Activated CD8-positive, alpha-beta memory T cell treated with anti-CD3 and anti-CD28 coated beads, Interleukin-2, amount 10 ng/mL, durations not matched to agents 7 days and 5 days (primary cell): ENCODE measurements at regions of chr5 and their contacts with region 1.

Region 1: DNA sequence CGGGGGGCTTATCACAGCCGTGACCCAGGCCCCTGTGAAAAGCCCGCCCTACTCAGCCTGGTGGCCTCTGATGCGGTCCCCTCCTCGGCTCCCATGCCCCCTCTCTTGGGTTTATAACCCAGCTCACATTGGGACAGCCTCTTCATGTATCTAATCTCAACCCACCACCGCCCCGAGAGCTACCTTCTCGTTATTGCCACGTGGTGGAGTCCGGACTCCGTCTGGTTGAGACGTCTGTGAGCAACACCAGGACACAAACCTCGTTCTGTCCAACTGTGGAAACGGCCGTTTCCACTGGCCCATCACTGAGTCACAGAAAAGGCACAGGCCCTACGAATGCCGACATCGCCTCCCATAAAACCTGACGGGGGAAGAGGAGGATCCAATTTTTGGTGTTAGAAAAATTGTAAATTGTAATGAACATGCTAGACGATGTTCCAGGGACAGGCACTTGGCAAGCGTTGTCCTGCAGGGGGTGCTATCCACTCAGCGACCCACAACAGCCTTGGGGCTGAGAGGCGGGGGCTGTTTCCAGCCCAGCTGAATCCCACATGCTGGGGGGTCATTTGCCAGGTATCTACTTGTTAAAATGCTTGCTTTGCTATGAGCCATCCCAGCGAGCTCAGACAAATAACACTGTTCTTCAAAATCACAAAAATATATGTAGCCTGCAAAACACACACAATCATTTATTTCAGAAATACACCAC is 37.3 kb upstream of the N4BP3 start:
- DNase-seq: peak; percentile 82
- ATAC-seq: peak; percentile 90
- H3K4me3 Mint-ChIP-seq: no peak overlapping the region
- H3K27ac Mint-ChIP-seq: no peak overlapping the region
- H3K4me1 Mint-ChIP-seq: no peaks in the 10 kb centered on the region
- H3K27me3 Mint-ChIP-seq: peaks cover 7% of the 10 kb centered on the region

Region 2: GRCh38 chr5:178090858-178091540 is 15.0 kb after region 1 on chr5:
- CTCF ChIA-PET with region 1: interaction called, 13 read pairs
- DNase-seq: no peak
- ATAC-seq: no peak
- H3K4me3 Mint-ChIP-seq: no peak overlapping the region
- H3K27ac Mint-ChIP-seq: no peak overlapping the region
- H3K4me1 Mint-ChIP-seq: peaks cover 9% of the 10 kb centered on the region
- H3K27me3 Mint-ChIP-seq: peaks cover 8% of the 10 kb centered on the region

Region 3: DNA sequence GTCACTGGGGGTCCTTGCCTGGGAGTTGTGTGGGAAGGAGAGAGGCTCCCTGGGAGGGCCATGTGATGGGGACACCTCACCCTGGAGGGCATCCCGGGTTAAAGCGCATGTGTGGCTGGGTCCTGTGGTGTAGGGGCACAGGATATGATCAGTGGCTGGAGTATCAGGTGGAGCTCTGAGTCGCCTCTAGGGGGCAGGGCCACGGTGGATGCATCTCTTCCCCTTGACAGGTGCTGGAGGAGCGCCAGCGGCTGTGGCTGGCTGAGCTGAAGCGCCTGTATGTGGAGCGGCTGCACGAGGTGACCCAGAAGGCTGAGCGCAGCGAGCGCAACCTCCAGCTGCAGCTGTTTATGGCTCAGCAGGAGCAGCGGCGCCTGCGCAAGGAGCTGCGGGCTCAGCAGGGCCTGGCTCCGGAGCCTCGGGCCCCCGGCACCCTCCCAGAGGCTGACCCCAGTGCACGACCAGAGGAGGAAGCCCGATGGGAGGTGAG is 44.9 kb after region 1 on chr5:
- CTCF ChIA-PET with region 1: interaction called, 45 read pairs
- DNase-seq: peak; percentile 90
- ATAC-seq: peak; percentile 92
- H3K4me3 Mint-ChIP-seq: no peak overlapping the region
- H3K27ac Mint-ChIP-seq: no peak overlapping the region
- H3K4me1 Mint-ChIP-seq: peaks cover 22% of the 10 kb centered on the region
- H3K27me3 Mint-ChIP-seq: no peaks in the 10 kb centered on the region

Region 4: DNA sequence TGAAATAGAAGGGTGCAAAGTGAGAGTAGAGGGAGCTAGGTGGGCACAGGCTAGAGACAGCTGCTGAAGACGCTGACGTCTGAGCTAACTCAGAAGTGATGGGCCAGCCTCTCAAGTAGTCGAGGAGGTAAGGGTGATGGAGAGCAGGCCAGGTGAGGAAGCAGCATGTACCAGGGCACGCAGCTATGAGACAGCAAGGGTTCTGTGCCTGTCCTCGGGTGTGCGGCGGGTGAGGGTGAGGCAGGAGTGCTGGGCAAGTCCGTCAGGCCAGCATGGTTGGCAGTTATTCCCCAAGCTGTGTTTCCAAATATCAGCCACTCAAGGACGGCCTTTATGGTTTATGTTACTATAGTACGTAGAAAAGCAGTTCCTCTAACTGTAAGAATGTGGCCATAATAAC is 61.0 kb after region 1 on chr5:
- CTCF ChIA-PET with region 1: interaction called, 10 read pairs
- DNase-seq: no peak
- ATAC-seq: no peak
- H3K4me3 Mint-ChIP-seq: no peak overlapping the region
- H3K27ac Mint-ChIP-seq: no peak overlapping the region
- H3K4me1 Mint-ChIP-seq: no peaks in the 10 kb centered on the region
- H3K27me3 Mint-ChIP-seq: no peaks in the 10 kb centered on the region

Region 5: DNA sequence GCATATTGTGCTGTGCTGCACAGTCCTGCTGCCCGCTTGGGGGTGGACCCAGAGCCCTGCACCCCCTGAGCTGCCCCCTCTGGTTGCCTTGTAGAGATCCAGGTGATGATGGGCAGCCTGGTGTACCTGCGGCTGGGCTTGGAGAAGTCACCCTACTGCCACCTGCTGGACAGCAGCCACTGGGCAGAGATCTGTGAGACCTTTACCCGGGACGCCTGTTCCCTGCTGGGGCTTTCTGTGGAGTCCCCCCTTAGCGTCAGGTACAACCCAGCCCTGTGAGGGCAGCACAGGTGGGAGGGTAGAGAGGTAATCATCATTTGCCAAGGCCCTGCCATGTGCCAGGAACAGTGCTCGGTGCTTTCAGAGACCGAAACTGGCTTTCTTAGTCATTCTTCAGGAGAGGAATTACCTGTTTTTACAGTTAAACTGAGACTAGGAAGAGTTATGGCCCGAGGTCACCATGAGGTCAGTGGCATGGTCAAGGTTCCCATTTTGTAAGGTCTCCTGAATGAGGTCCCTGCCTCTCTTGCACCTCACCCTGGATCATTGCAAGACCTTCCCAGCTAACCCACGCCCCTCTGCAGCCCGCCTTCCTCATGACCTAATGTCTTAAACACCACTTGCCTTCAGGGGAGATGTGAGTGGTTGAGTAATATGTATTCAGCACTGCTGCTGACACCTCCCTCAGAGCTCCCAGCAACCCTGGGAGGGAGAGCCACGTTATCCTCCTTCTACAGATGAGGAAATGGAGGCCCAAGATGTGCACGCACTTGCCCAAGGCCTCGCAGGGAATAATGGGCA is 70.2 kb after region 1 on chr5:
- CTCF ChIA-PET with region 1: interaction called, 148 read pairs
- DNase-seq: peak; percentile 81
- ATAC-seq: peak; percentile 89
- H3K4me3 Mint-ChIP-seq: no peak overlapping the region
- H3K27ac Mint-ChIP-seq: no peak overlapping the region
- H3K4me1 Mint-ChIP-seq: peaks cover 31% of the 10 kb centered on the region
- H3K27me3 Mint-ChIP-seq: no peaks in the 10 kb centered on the region

Region 6: DNA sequence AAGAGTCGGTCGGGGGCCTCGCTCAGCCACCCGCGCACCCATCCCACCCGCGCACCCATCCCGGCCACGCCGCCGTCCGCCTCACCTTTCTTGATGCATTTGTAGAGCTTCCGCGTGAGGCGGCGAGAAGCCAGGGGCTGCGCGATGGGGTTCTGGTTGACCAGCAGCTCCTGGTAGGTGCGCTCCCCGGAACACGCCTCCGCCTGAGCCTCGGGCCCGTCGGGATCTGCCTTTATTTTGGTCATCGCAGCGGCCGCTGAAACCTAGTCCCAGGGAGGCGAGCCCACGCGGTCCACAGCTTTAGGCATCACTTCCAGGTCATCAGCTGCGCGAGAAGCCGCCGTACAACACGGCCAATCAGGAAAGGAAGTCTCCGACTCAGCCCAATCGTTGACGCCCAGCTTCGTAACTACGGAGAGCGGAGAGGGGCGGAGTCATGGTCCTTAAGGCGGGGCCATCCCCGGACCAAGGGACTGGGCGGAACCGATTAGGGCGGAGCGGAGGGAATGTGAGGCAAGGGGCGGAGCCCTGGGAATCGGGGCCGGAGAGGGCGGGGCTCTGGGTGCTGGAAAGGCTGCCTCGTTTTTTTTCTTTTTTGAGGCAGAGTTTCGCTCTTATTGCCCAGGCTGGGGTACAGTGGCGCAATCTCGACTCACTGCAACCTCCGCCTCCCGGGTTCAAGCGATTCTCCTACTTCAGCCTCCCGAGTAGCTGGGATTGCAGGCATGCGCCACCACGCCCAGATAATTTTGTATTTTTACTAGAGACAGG is 77.8 kb after region 1 on chr5 and contains the start of gene NHP2:
- CTCF ChIA-PET with region 1: interaction called, 148 read pairs
- DNase-seq: peak; percentile 99
- ATAC-seq: peak; percentile 100
- H3K4me3 Mint-ChIP-seq: peak within 1 kb of the TSS; percentile 97
- H3K27ac Mint-ChIP-seq: peak within 1 kb of the TSS; percentile 87
- H3K4me1 Mint-ChIP-seq: peaks cover 40% of the 10 kb centered on the region
- H3K27me3 Mint-ChIP-seq: no peaks in the 10 kb centered on the region
- total RNA-seq, gene NHP2: 144 to 168 TPM

Region 7: GRCh38 chr5:178163772-178164735 is 88.1 kb after region 1 on chr5:
- CTCF ChIA-PET with region 1: interaction called, 34 read pairs
- DNase-seq: peak; percentile 92
- ATAC-seq: peak; percentile 99
- H3K4me3 Mint-ChIP-seq: peak overlapping the region; percentile 5
- H3K27ac Mint-ChIP-seq: no peak overlapping the region
- H3K4me1 Mint-ChIP-seq: peaks cover 8% of the 10 kb centered on the region
- H3K27me3 Mint-ChIP-seq: peaks cover 29% of the 10 kb centered on the region